ENCODE measurements at regions of chr16 and their contacts with region 1.

Region 1: DNA sequence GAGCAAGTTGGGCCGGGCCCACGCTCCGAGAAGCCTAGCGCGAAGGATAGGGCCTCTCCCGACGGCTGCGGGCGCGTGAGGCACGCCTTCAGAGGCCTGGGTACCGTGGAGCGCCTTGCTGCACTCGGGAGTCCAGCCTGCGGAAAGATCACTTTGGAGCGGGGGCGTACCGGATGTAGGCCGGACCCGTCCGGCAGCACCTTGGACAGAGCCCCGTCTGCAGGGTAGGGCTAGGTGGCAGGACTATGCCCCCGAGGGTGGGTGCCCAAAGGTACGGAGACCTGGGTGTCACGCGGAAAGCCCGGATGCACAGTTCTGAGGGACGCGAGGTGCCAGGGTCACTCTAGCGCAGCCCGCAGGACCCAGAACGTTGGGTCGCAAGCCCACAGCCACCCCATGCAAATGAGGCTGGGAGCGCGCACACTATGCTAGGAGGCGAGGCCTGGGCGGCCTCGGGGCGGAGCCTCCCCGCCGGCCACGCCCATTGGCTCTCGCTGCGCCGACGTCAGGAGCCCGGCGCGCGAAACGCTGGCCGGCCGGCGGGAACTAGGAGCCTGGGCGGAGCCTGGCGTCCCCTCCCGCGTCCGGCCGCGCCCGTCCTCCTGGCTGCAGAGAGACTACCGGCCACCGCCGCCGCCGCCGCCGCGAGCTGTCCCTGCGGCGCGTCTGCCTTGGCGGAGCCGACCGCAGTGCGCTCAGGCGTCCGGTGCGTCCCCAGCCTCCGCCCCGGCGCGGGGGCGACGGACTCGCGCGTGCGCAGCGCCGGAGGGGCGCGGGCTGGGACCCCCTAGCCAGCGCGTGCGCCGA is at the start of gene PAQR4:
- DNase-seq: peak in 1 of 2 experiments; percentile 95
- H3K4me3 ChIP-seq: peak within 1 kb of the TSS; percentile 74 to 94 (median 80)
- H3K27ac ChIP-seq: peak within 1 kb of the TSS; percentile 48; the same call in 1 of the 2 replicates
- H3K4me1 ChIP-seq: peaks cover 0 to 31% (median 15%) of the 10 kb centered on the region in 4 experiments; a peak in 6 of 7 replicates
- H3K27me3 ChIP-seq: peaks cover 15 to 32% (median 23%) of the 10 kb centered on the region in 4 experiments; a peak in 6 of 7 replicates
- CTCF ChIP-seq: no peak
- EP300 ChIP-seq: peak in 1 of 2 experiments; percentile 16; a peak in 1 of 3 replicates
- POLR2A ChIP-seq: peak in 1 of 2 experiments; percentile 59; a peak in 2 of 3 replicates
- RAD21 ChIP-seq: no peak
- total RNA-seq, gene PAQR4: 28.2 and 28.8 TPM in 2 replicates

Region 2: GRCh38 chr16:2952679-2953078 is 16.3 kb before region 1 on chr16:
- CTCF ChIA-PET with region 1: interaction called, 41 read pairs
- POLR2A ChIA-PET with region 1: interaction called, 7 read pairs
- DNase-seq: no peak
- H3K4me3 ChIP-seq: no peak overlapping the region
- H3K27ac ChIP-seq: no peak overlapping the region
- H3K4me1 ChIP-seq: peaks cover 3 to 26% (median 19%) of the 10 kb centered on the region in 4 experiments
- H3K27me3 ChIP-seq: no peaks in the 10 kb centered on the region; a peak in 1 of 7 replicates
- CTCF ChIP-seq: no peak
- EP300 ChIP-seq: no peak
- POLR2A ChIP-seq: no peak
- RAD21 ChIP-seq: no peak

Region 3: DNA sequence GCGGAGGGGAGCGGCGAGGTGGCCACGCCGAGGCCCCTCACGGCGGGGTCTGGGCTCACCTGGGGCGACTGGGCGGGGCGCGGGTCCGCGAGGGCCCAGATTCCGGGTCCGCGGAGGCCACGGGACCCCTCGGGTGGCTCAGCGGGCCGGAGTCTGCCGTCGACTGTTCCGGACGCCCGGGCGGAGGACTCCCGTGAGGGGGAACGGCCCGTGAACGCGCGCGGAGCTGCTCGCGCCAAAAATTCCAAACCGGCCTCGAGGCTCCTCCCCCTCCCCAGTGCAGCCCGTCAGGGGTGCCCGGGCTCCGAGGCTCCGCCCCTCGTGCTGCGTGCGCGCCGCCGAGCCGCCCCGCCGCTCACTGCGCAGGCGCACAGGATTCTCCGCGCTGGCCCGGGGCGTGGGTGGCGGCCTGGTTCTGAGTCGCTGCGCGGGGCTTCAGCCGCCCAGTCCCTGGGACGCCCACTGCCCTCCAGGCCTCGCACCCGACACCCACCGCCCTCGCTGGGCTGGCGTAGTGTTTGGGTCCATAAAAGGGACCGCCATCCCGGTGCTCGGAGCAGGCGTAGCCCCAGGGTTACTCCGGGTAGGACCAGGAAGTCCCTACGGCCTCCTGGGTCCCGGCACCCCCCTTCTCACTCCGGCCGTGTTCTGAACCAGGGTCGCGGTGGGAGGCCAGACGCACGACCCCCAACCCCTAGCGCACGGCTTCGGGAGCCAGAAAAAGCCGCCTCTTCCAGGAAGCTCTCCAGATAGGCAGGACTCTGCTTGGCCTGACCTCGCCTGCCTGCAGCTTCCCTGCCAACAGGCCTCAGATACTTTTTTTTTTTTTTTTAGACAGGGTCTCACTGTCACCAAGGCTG is 11.5 kb after region 1 on chr16 and contains the start of gene PKMYT1:
- CTCF ChIA-PET with region 1: interaction called, 19 read pairs
- POLR2A ChIA-PET with region 1: interaction called, 128 read pairs
- DNase-seq: peak in 1 of 2 experiments; percentile 95
- H3K4me3 ChIP-seq: peak within 1 kb of the TSS; percentile 68 to 79 (median 73)
- H3K27ac ChIP-seq: peak within 1 kb of the TSS; percentile 91
- H3K4me1 ChIP-seq: peaks cover 3 to 23% (median 14%) of the 10 kb centered on the region in 4 experiments
- H3K27me3 ChIP-seq: no peaks in the 10 kb centered on the region; a peak in 1 of 7 replicates
- CTCF ChIP-seq: no peak
- EP300 ChIP-seq: no peak
- POLR2A ChIP-seq: peak in 1 of 2 experiments; percentile 79; a peak in 2 of 3 replicates
- RAD21 ChIP-seq: no peak
- total RNA-seq, gene PKMYT1: 74.7 and 83.6 TPM in 2 replicates

Region 4: DNA sequence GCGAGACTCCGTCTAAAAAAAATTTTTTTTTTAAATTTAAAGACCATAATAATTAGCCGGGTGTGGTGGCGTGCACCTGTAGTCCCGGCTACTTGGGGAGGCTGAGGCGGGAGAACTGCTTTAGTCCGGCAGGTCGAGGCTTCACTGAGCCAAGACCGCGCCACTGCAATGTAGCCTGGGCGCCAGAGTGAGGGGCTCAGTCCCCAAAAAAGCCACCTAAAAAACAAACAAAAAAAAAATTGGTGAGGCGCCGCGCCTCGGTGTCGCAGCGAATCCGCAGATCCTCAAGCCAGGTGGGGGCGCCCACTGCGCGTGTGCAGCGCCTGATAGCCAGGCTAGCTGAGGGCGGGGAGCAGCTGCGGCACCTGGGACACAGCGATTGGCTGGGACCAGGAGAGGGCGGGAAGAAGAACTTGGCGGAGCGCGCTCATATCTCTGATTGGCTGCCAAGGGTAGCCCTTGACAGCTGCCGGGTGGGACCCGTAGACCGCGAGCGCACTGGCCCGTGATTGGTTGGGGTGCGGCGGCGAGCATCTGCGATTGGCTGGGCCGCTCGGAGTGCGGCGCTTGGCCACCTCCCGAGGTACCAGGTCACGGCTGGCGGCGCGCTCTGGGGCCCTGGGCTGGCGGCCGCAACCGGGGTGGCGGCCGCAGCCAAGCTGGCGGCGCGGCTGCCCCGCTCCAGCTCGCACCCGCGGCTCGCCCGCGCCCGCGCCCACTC is 34.8 kb after region 1 on chr16:
- CTCF ChIA-PET with region 1: interaction called, 5 read pairs
- POLR2A ChIA-PET with region 1: interaction called, 111 read pairs
- DNase-seq: peak; percentile 95 to 98
- H3K4me3 ChIP-seq: peak overlapping the region in 1 of 4 experiments; percentile 58; a peak in 1 of 8 replicates
- H3K27ac ChIP-seq: no peak overlapping the region
- H3K4me1 ChIP-seq: peaks cover 11 to 33% (median 27%) of the 10 kb centered on the region in 4 experiments
- H3K27me3 ChIP-seq: no peaks in the 10 kb centered on the region
- CTCF ChIP-seq: peak; percentile 63 to 93 (median 71)
- EP300 ChIP-seq: peak in 1 of 2 experiments; percentile 36; a peak in 1 of 3 replicates
- POLR2A ChIP-seq: 0 out of 3 replicates have a peak, but pooled peaks of 1 of the 2 experiments have one; percentile 32
- RAD21 ChIP-seq: peak; percentile 85 to 92

Region 5: GRCh38 chr16:3017794-3018506 is 49.0 kb after region 1 on chr16 and contains the start of gene CLDN6:
- CTCF ChIA-PET with region 1: interaction called, 10 read pairs
- POLR2A ChIA-PET with region 1: interaction called, 455 read pairs
- DNase-seq: peak; percentile 92 to 100
- H3K4me3 ChIP-seq: peak within 1 kb of the TSS; percentile 58 to 96 (median 92)
- H3K27ac ChIP-seq: peak within 1 kb of the TSS; percentile 96
- H3K4me1 ChIP-seq: peaks cover 5 to 43% (median 37%) of the 10 kb centered on the region in 4 experiments
- H3K27me3 ChIP-seq: no peaks in the 10 kb centered on the region
- CTCF ChIP-seq: peak; percentile 85 to 94 (median 92)
- EP300 ChIP-seq: peak in 1 of 2 experiments; percentile 73; a peak in 1 of 3 replicates
- POLR2A ChIP-seq: peak; percentile 98 to 99
- RAD21 ChIP-seq: peak; percentile 72 to 81
- total RNA-seq, gene CLDN6: 747 and 793 TPM in 2 replicates

Region 6: GRCh38 chr16:3134564-3135417 is 165.8 kb after region 1 on chr16 and contains the start of gene ZNF213:
- CTCF ChIA-PET with region 1: no interaction called
- POLR2A ChIA-PET with region 1: no interaction called
- DNase-seq: peak; percentile 88 to 93
- H3K4me3 ChIP-seq: peak within 1 kb of the TSS; percentile 86 to 96 (median 90)
- H3K27ac ChIP-seq: peak within 1 kb of the TSS; percentile 97
- H3K4me1 ChIP-seq: peaks cover 0 to 2% (median 0%) of the 10 kb centered on the region in 4 experiments; a peak in 1 of 7 replicates
- H3K27me3 ChIP-seq: no peaks in the 10 kb centered on the region
- CTCF ChIP-seq: no peak
- EP300 ChIP-seq: no peak
- POLR2A ChIP-seq: peak in 1 of 2 experiments; percentile 92; a peak in 2 of 3 replicates
- RAD21 ChIP-seq: no peak
- total RNA-seq, gene ZNF213: 6.9 and 7.3 TPM in 2 replicates